Activated CD4-positive, alpha-beta memory T cell treated with anti-CD3 and anti-CD28 coated beads for 36 hours (primary cell): ENCODE measurements at regions of chr6 and their contacts with region 1.

Region 1: GRCh38 chr6:108835218-108835850 is 12.9 kb upstream of the ARMC2 start:
- DNase-seq: peak; percentile 91
- H3K4me3 Mint-ChIP-seq: no peak overlapping the region
- H3K27ac Mint-ChIP-seq: no peak overlapping the region
- H3K4me1 Mint-ChIP-seq: peaks cover 13% of the 10 kb centered on the region
- H3K27me3 Mint-ChIP-seq: no peaks in the 10 kb centered on the region

Region 2: GRCh38 chr6:108541838-108542759 is 293.2 kb before region 1 on chr6:
- CTCF ChIA-PET with region 1: interaction called, 41 read pairs
- POLR2A ChIA-PET with region 1: no interaction called
- intact Hi-C with region 1: loop called (anchors 1 kb)
- DNase-seq: peak; percentile 79
- H3K4me3 Mint-ChIP-seq: peak overlapping the region; percentile 17
- H3K27ac Mint-ChIP-seq: no peak overlapping the region
- H3K4me1 Mint-ChIP-seq: peaks cover 7% of the 10 kb centered on the region
- H3K27me3 Mint-ChIP-seq: peaks cover 6% of the 10 kb centered on the region

Region 3: DNA sequence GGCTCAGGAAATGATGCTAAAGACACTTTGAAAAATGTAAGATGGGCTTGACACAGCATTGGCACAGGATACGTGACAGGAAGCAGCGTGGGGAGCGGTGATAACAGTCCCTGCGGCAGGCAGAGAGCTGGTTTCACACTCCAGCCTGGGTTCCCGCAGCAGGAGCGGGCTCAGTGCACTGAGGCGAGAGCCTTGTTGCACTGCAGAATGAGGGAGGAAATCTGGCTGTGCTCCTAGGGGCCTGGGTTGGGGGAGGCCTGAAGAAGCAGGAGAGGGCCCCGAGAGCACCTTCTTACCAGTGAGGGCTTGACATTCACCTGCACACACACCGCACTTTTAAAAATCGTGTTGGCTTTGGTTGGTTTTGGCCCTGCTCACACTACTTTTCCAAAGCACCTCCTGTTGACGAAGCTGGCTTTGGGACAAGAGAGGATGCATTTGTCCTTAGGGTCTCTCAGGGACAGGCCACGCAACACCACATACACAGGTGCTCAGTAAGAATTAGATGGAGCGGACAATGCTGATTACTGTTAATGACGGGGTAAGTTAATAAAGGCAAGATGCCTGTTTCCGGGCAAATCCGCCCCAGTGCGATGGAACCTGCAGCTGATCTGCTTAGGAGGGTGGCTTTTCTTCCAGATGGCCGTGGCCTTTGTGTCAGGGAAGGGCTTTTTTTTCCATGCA is 36.5 kb before region 1 on chr6:
- CTCF ChIA-PET with region 1: interaction called, 3 read pairs
- POLR2A ChIA-PET with region 1: no interaction called
- intact Hi-C with region 1: loop called (anchors 5 kb)
- DNase-seq: peak; percentile 76
- H3K4me3 Mint-ChIP-seq: no peak overlapping the region
- H3K27ac Mint-ChIP-seq: peak overlapping the region; percentile 35
- H3K4me1 Mint-ChIP-seq: peaks cover 15% of the 10 kb centered on the region
- H3K27me3 Mint-ChIP-seq: no peaks in the 10 kb centered on the region

Region 4: GRCh38 chr6:108820006-108820405 is 15.3 kb before region 1 on chr6:
- CTCF ChIA-PET with region 1: no interaction called
- POLR2A ChIA-PET with region 1: no interaction called
- intact Hi-C with region 1: no loop called
- DNase-seq: no peak
- H3K4me3 Mint-ChIP-seq: no peak overlapping the region
- H3K27ac Mint-ChIP-seq: no peak overlapping the region
- H3K4me1 Mint-ChIP-seq: no peaks in the 10 kb centered on the region
- H3K27me3 Mint-ChIP-seq: peaks cover 1% of the 10 kb centered on the region